Activated naive CD4-positive, alpha-beta T cell treated with anti-CD3 and anti-CD28 coated beads for 36 hours (primary cell): ENCODE measurements at regions of chr10 and their contacts with region 1.

Region 1: DNA sequence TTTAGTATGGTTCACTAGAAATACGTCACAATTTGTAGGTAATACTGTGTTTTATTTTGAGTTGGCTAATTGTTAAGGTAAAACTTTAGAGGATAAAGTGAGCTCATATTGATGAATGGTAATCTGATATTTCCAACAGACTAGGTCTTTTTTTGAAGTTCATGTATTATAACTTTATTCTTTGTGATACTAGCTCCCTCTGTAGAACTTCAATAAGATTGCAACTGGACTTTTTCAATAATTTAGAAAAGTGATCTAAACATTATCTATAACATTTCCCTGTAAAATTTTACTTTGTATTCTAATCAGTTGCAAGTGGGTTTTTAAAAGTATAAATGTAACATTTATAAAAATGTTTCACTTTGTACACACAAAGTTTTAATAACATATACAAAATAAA is 83.5 kb downstream of the ADK start:
- DNase-seq: no peak
- H3K4me3 Mint-ChIP-seq: no peak overlapping the region
- H3K27ac Mint-ChIP-seq: no peak overlapping the region
- H3K4me1 Mint-ChIP-seq: no peaks in the 10 kb centered on the region
- H3K27me3 Mint-ChIP-seq: no peaks in the 10 kb centered on the region

Region 2: DNA sequence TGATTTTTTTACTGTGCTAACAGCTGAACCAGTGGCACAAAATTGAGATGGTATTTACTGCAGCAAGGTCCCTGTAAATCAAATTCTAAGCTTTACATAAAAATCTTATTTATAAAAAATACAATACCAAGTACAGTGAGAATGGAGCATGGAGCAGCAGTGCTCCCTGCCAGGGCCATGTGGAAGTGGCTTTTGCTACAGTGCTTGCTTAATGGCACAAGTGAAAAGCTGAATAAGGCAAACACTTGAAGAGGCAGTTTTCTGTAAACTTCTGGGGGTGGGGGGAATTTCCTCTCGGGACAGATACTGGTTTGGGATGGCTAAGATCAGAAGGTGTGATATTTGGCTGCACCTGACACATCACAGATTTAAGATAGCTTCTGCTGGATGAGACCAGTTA is 111.5 kb before region 1 on chr10:
- CTCF ChIA-PET with region 1: no interaction called
- intact Hi-C with region 1: loop called (anchors 1 kb)
- DNase-seq: no peak
- H3K4me3 Mint-ChIP-seq: no peak overlapping the region
- H3K27ac Mint-ChIP-seq: peak overlapping the region; percentile 48
- H3K4me1 Mint-ChIP-seq: peaks cover 2% of the 10 kb centered on the region
- H3K27me3 Mint-ChIP-seq: no peaks in the 10 kb centered on the region

Region 3: DNA sequence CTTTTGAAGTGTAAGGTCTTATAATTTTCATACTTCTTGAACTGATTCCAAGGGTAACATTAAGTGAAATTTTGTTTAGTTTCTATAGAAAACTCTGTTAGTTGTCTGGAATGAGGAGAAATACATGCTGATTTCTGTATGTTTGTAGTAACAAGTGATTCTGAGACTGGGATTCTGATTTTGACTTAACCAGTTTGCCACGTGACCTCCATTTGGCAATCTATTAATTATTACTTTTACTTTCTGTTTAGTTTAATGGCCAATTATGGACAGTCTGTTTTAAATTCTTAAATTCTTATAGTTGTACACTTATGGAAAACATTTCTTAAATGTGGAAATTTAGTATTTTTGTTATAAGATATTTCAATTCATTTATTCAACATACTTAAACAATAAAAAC is 79.6 kb after region 1 on chr10:
- CTCF ChIA-PET with region 1: no interaction called
- intact Hi-C with region 1: no loop called
- DNase-seq: no peak
- H3K4me3 Mint-ChIP-seq: no peak overlapping the region
- H3K27ac Mint-ChIP-seq: no peak overlapping the region
- H3K4me1 Mint-ChIP-seq: peaks cover 3% of the 10 kb centered on the region
- H3K27me3 Mint-ChIP-seq: no peaks in the 10 kb centered on the region

Region 4: GRCh38 chr10:74394416-74394969 is 159.9 kb after region 1 on chr10:
- CTCF ChIA-PET with region 1: no interaction called
- intact Hi-C with region 1: no loop called
- DNase-seq: no peak
- H3K4me3 Mint-ChIP-seq: no peak overlapping the region
- H3K27ac Mint-ChIP-seq: no peak overlapping the region
- H3K4me1 Mint-ChIP-seq: peaks cover 5% of the 10 kb centered on the region
- H3K27me3 Mint-ChIP-seq: no peaks in the 10 kb centered on the region

Region 5: GRCh38 chr10:74419958-74420375 is 185.4 kb after region 1 on chr10:
- CTCF ChIA-PET with region 1: no interaction called
- intact Hi-C with region 1: no loop called
- DNase-seq: peak; percentile 55
- H3K4me3 Mint-ChIP-seq: no peak overlapping the region
- H3K27ac Mint-ChIP-seq: no peak overlapping the region
- H3K4me1 Mint-ChIP-seq: peaks cover 6% of the 10 kb centered on the region
- H3K27me3 Mint-ChIP-seq: no peaks in the 10 kb centered on the region